ENCODE measurements at regions of chr3 and their contacts with region 1.

Region 1: DNA sequence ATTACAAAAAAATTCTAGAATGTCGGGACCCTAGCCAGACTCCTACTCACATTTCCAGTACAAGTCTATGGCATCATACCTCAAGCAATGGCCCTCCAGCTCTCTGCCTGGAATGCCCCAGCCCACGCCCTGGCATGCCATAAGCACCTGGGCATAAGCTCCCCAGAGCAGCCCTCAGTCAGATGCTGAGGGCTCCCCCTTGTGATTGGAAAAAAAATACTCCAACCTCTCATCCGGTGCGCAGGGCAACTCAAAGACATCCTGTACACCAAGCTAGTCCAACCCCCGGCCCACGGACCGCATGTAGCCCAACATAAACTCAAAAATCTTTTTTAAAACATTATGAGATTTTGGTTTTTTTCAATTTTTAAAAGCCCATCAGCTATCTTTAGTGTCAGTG is 115.4 kb downstream of the NEK10 start:
- DNase-seq: peak; percentile 17
- H3K4me3 ChIP-seq: no peak overlapping the region
- H3K27ac ChIP-seq: no peak overlapping the region
- H3K4me1 ChIP-seq: no peaks in the 10 kb centered on the region
- H3K27me3 ChIP-seq: no peaks in the 10 kb centered on the region
- CTCF ChIP-seq: peak; percentile 59 to 75 (median 68)

Region 2: GRCh38 chr3:27134165-27134796 is 119.5 kb before region 1 on chr3:
- dilution Hi-C with region 1: loop called (anchors 25 kb)
- DNase-seq: no peak
- H3K4me3 ChIP-seq: no peak overlapping the region
- H3K27ac ChIP-seq: no peak overlapping the region
- H3K4me1 ChIP-seq: no peaks in the 10 kb centered on the region
- H3K27me3 ChIP-seq: no peaks in the 10 kb centered on the region
- CTCF ChIP-seq: peak; percentile 88 to 92 (median 88)

Measured in keratinocyte (primary cell).